MCF 10A (cell line): ENCODE measurements at regions of chr13 and their contacts with region 1.

Region 1: DNA sequence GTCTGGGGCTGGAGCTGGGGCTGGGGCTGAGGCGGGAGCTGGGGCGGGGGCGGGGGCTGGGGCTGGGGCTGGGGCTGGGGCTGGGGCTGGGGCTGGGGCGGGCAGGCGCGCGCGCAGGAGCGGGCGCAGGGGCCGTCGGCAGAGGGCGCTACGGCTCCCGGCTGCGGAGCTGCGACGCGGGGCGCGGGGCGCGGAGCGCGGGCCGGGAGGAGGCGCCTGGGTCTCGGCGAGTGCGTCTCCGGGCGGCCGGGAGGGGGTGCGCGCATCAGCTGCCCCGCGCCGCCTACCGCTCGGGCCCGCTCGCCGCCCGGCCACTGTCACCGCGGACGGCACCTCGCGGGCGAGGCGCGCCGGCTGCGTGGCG is 422 bp upstream of the MTUS2 start:
- DNase-seq: no peak
- H3K4me3 Mint-ChIP-seq: peak overlapping the region; percentile 22
- H3K27ac Mint-ChIP-seq: no peak overlapping the region
- H3K4me1 Mint-ChIP-seq: no peaks in the 10 kb centered on the region
- H3K27me3 Mint-ChIP-seq: peaks cover 33% of the 10 kb centered on the region
- CTCF ChIP-seq: peak; percentile 32

Region 2: DNA sequence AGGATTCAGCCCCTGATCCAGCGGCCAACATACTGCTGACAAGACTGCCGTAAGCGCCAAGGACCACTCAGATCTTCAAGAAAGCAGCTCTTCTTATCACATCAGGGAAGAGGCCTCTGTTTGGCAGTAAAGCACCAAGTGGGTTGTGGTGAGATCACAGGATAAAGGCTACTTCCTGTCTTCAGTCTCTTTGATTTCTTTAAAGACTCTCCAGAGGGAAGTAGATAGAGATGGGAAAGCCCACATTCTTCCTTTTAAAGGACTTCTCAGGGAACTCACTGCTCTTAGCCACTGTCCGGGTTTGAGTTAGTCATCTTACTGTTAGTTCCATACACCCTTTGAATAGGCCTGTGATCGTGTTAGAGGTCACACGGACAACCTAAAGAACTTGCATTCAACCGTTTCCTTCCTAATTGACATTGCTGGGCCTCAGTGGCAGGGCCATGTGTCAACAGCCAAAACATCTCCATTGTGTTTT is 208.0 kb before region 1 on chr13:
- CTCF ChIA-PET with region 1: no interaction called
- POLR2A ChIA-PET with region 1: no interaction called
- intact Hi-C with region 1: no loop called
- DNase-seq: no peak
- H3K4me3 Mint-ChIP-seq: no peak overlapping the region
- H3K27ac Mint-ChIP-seq: no peak overlapping the region
- H3K4me1 Mint-ChIP-seq: no peaks in the 10 kb centered on the region
- H3K27me3 Mint-ChIP-seq: no peaks in the 10 kb centered on the region
- CTCF ChIP-seq: no peak

Region 3: DNA sequence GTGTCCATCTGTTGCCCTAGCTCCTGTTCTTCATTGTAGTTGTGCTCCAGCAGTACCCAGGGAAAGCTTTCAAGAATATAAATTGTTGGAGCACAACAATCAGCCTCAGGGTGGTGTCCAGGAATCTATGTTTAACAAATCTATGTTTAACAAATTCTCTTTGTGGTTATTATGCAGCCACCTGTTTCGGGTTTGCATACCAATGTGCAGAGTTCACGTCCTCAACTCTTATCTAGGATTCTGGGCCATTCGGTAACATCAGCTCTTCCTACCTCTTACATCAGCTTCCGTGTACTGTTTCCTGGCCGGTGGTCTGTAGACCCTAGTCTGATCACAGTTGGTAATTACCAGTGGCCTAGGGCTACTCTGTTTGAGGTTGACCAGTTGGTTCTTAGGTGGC is 17.4 kb after region 1 on chr13:
- CTCF ChIA-PET with region 1: interaction called, 10 read pairs
- POLR2A ChIA-PET with region 1: no interaction called
- intact Hi-C with region 1: no loop called
- DNase-seq: no peak
- H3K4me3 Mint-ChIP-seq: no peak overlapping the region
- H3K27ac Mint-ChIP-seq: no peak overlapping the region
- H3K4me1 Mint-ChIP-seq: no peaks in the 10 kb centered on the region
- H3K27me3 Mint-ChIP-seq: no peaks in the 10 kb centered on the region
- CTCF ChIP-seq: no peak

Region 4: GRCh38 chr13:29369060-29369743 is 549.5 kb after region 1 on chr13:
- CTCF ChIA-PET with region 1: interaction called, 6 read pairs
- POLR2A ChIA-PET with region 1: no interaction called
- intact Hi-C with region 1: loop called (anchors 2 kb)
- DNase-seq: peak; percentile 62
- H3K4me3 Mint-ChIP-seq: no peak overlapping the region
- H3K27ac Mint-ChIP-seq: no peak overlapping the region
- H3K4me1 Mint-ChIP-seq: no peaks in the 10 kb centered on the region
- H3K27me3 Mint-ChIP-seq: peaks cover 12% of the 10 kb centered on the region
- CTCF ChIP-seq: peak; percentile 28